Activated B cell treated with CpG ODN at 0.5 μM for 24 hours (primary cell): ENCODE measurements at regions of chr14 and their contacts with region 1.

Region 1: DNA sequence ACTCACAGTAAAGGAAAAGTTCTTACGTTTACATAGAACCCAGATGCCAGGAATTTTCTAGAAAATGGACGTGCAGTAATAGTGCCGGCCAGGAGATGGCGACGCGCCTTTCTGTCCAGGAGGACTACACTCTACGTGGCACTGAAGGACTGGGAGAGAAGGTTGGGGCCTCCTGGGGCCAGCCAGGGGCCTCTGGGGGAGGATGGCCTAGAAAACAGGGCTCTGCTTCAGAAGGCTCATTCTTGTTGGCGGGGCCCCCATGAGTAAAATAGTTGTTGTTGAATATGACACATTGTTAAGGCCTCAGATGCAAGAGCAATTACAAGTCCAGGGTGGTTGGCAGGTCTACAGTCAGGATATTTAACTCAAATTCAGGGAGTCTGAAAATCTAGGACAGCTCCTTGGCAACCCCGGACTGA is 120.1 kb upstream of the MAX start:
- DNase-seq: no peak
- ATAC-seq: peak; percentile 91
- H3K4me3 Mint-ChIP-seq: peak overlapping the region; percentile 11
- H3K27ac Mint-ChIP-seq: peak overlapping the region; percentile 18
- H3K4me1 Mint-ChIP-seq: peaks cover 62% of the 10 kb centered on the region
- H3K27me3 Mint-ChIP-seq: no peaks in the 10 kb centered on the region
- CTCF ChIP-seq: peak; percentile 58

Region 2: GRCh38 chr14:65239938-65240296 is 17.5 kb after region 1 on chr14:
- CTCF ChIA-PET with region 1: no interaction called
- POLR2A ChIA-PET with region 1: interaction called, 3 read pairs
- intact Hi-C with region 1: loop called (anchors 2 kb)
- DNase-seq: no peak
- ATAC-seq: no peak
- H3K4me3 Mint-ChIP-seq: no peak overlapping the region
- H3K27ac Mint-ChIP-seq: no peak overlapping the region
- H3K4me1 Mint-ChIP-seq: peaks cover 8% of the 10 kb centered on the region
- H3K27me3 Mint-ChIP-seq: no peaks in the 10 kb centered on the region
- CTCF ChIP-seq: no peak

Region 3: GRCh38 chr14:65346947-65347346 is 124.5 kb after region 1 on chr14:
- CTCF ChIA-PET with region 1: no interaction called
- POLR2A ChIA-PET with region 1: interaction called, 10 read pairs
- intact Hi-C with region 1: no loop called
- DNase-seq: no peak
- ATAC-seq: no peak
- H3K4me3 Mint-ChIP-seq: no peak overlapping the region
- H3K27ac Mint-ChIP-seq: no peak overlapping the region
- H3K4me1 Mint-ChIP-seq: peaks cover 34% of the 10 kb centered on the region
- H3K27me3 Mint-ChIP-seq: no peaks in the 10 kb centered on the region
- CTCF ChIP-seq: no peak

Region 4: GRCh38 chr14:65604936-65605335 is 382.5 kb after region 1 on chr14:
- CTCF ChIA-PET with region 1: interaction called, 3 read pairs
- POLR2A ChIA-PET with region 1: no interaction called
- intact Hi-C with region 1: loop called (anchors 1 kb)
- DNase-seq: no peak
- ATAC-seq: peak; percentile 21
- H3K4me3 Mint-ChIP-seq: no peak overlapping the region
- H3K27ac Mint-ChIP-seq: no peak overlapping the region
- H3K4me1 Mint-ChIP-seq: peaks cover 7% of the 10 kb centered on the region
- H3K27me3 Mint-ChIP-seq: no peaks in the 10 kb centered on the region
- CTCF ChIP-seq: no peak

Region 5: DNA sequence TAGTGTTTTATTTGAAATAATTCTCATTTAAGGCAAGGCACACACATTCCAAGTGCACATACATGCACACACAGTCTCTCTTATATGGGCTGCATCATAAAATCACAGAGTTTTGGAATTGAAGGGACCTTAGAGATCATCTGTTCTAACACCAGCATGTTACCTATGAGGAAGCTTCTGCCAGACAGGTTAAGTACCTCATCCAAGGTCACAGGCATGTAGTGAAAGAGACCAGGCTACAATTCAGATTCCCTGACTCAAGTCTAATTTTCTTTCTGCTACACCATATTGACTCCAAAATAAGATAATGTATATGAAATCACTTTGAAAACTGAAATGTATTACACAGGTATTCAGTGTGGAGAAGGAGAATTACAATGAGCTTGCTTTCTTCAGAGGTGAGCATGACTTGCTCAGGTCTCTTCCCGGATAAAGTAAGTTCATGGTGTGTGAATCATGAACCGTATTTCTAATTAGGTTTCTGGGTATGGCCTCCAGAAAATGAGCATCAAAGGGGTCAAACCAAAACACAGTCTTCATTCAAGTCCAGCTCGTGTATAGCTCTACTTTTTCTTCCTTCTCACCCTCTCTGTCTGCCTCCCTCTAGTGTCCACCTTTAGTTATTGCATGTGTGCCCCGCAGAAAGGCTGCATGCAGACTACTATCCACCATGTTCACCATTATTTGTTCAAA is 602.0 kb after region 1 on chr14:
- CTCF ChIA-PET with region 1: interaction called, 8 read pairs
- POLR2A ChIA-PET with region 1: no interaction called
- intact Hi-C with region 1: loop called (anchors 1 kb)
- DNase-seq: no peak
- ATAC-seq: peak; percentile 99
- H3K4me3 Mint-ChIP-seq: no peak overlapping the region
- H3K27ac Mint-ChIP-seq: no peak overlapping the region
- H3K4me1 Mint-ChIP-seq: peaks cover 1% of the 10 kb centered on the region
- H3K27me3 Mint-ChIP-seq: peaks cover 5% of the 10 kb centered on the region
- CTCF ChIP-seq: peak; percentile 82

Region 6: GRCh38 chr14:65958664-65959562 is 736.5 kb after region 1 on chr14:
- CTCF ChIA-PET with region 1: no interaction called
- POLR2A ChIA-PET with region 1: no interaction called
- intact Hi-C with region 1: loop called (anchors 2 kb)
- DNase-seq: no peak
- ATAC-seq: peak; percentile 57
- H3K4me3 Mint-ChIP-seq: no peak overlapping the region
- H3K27ac Mint-ChIP-seq: no peak overlapping the region
- H3K4me1 Mint-ChIP-seq: no peaks in the 10 kb centered on the region
- H3K27me3 Mint-ChIP-seq: peaks cover 20% of the 10 kb centered on the region
- CTCF ChIP-seq: no peak